GM12878 (cell line): ENCODE measurements at regions of chr3 and their contacts with region 1.

Region 1: DNA sequence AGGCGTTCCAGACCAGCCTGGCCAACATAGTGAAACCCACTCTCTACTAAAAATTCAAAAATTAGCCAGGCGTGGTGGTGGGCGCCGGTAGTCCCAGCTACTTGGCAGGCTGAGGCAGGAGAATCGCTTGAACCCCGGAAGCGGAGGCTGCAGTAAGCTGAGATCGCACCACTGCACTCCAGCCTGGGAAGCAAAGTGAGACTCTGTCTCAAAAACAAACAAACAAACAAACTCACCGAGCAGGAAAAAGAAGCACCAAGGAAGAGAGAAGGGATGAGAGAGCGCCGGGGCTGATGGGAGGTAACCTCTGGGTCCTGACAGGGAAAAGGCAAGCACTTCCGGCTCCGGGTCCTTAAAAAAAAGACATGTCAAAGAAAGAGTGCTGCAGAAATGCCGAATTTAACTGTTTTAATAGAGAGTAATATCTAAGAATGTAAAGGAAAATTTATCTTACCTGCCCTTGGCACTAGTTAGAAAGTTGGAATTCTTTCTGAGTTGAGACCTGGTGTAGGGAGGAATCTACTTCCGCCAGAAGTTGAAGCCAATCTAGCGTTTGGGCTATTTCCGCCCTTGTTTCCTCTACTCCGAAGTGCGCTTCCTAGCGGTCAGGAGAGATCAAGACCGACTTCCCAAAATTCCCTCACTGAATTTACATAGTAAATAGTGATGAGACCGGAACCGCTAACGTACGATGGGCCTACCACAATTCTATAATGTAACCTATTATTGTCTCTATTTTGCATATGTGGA is 29.1 kb downstream of the EFCAB12 start:
- DNase-seq: peak; percentile 93
- ATAC-seq: peak; percentile 83
- H3K4me3 ChIP-seq: peak overlapping the region; percentile 69
- H3K27ac ChIP-seq: peak overlapping the region; percentile 87
- H3K4me1 ChIP-seq: no peaks in the 10 kb centered on the region; the same call in 1 of the 2 replicates
- H3K27me3 ChIP-seq: no peaks in the 10 kb centered on the region
- CTCF ChIP-seq: peak; percentile 82 to 91 (median 87)
- EP300 ChIP-seq: no peak
- POLR2A ChIP-seq: no peak
- RAD21 ChIP-seq: peak; percentile 31; the same call in 1 of the 2 replicates

Region 2: DNA sequence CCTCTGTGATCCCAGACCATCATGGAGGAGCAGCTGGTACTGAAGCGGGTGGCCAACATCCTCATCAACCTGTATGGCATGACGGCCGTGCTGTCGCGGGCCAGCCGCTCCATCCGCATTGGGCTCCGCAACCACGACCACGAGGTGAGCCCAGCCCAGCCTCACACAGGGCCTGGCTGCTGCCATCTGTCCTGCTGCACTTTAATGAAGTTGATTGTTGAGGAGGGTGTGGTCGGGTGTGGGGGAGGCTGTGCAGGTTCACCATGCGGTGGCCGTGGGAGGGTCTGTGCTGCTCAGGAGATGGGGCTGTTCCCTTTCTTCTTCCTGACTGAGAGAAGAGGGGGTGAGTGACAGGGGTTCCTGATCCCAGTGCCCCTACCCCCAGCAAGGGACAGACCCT is 489.3 kb before region 1 on chr3:
- CTCF ChIA-PET with region 1: no interaction called
- POLR2A ChIA-PET with region 1: no interaction called
- RAD21 ChIA-PET with region 1: no interaction called
- SMC1A ChIA-PET with region 1: no interaction called
- in situ Hi-C with region 1: no loop called
- intact Hi-C with region 1: no loop called
- DNase-seq: no peak
- ATAC-seq: no peak
- H3K4me3 ChIP-seq: no peak overlapping the region
- H3K27ac ChIP-seq: no peak overlapping the region
- H3K4me1 ChIP-seq: no peaks in the 10 kb centered on the region
- H3K27me3 ChIP-seq: no peaks in the 10 kb centered on the region
- CTCF ChIP-seq: no peak
- EP300 ChIP-seq: no peak
- POLR2A ChIP-seq: peak; percentile 23; the same call in 1 of the 2 replicates
- RAD21 ChIP-seq: no peak

Region 3: DNA sequence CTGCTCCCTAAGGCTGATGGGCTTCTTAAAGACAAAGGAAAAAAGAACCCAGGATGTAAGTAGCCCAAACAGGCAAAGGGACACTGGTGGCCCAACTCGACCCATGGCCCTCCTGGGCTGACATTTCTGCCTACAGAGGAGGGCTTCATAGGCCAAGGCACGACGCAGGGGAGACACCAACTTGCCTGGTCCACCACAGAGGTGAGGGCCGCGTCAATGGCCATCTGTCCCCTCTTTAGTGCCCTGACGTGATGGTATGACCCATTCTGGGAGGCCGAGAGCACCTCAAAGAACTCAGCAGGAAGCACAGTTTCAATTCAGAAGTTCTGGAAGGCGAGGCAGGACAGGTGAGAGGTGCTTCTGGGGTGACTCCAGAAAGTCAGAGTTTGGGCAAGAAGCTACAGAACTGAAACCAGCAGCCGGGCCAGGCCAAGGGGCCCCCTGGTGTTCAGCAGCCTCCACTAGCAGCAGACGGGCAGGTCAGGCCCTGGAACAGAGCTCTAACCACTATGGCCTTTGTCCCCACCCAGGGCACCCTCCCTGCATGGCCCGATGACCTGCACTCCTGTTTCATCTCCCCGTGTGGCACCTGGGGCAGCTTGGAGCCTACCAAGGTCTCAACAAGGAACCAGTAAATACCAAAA is 75.5 kb before region 1 on chr3:
- CTCF ChIA-PET with region 1: no interaction called
- POLR2A ChIA-PET with region 1: no interaction called
- RAD21 ChIA-PET with region 1: no interaction called
- SMC1A ChIA-PET with region 1: no interaction called
- in situ Hi-C with region 1: no loop called
- intact Hi-C with region 1: no loop called
- DNase-seq: no peak
- ATAC-seq: peak; percentile 81
- H3K4me3 ChIP-seq: no peak overlapping the region
- H3K27ac ChIP-seq: no peak overlapping the region
- H3K4me1 ChIP-seq: peaks cover 4% of the 10 kb centered on the region; the same call in 1 of the 2 replicates
- H3K27me3 ChIP-seq: peaks cover 0 to 3% of the 10 kb centered on the region in 2 experiments; a peak in 2 of 4 replicates
- CTCF ChIP-seq: peak; percentile 39 to 64 (median 45)
- EP300 ChIP-seq: no peak
- POLR2A ChIP-seq: no peak
- RAD21 ChIP-seq: peak; percentile 33

Region 4: DNA sequence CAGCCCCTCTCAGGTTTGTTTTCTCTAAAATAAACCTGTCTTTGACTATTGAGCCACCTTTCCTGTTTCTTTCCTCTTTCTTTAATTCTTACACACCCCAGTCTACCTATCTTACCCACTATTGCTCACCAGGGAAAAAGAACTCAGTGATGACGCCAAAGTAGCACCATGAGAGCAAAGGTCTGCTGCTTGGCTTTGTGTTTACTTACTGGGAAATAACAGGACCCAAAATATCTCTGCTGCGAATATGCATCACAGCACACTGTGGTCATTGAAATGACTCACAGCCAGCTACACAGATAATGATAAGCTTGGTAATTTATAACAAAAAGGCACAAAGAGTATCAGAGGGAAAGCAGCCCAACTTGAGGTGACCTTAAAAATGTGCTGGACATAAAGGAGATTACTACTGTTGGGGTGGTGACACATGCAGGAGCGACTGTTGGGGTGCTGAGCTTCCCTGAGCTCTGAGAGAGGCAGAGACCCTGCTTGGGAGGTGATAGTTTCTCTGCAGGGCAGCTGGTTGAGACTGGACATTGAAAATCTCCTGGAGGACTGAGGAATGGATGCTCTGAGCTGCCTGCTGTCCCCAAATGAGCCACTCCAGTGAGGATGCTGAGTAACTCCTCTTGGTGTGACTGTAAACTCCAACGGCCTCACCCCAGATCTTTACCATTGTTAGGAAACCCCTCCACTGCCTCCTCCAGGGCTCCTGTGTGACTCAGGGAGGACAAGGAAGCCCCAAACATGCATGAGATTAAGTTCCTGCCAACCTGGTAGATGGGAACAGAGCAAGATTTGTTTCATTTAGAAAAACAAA is 14.6 kb after region 1 on chr3:
- CTCF ChIA-PET with region 1: interaction called, 84 read pairs
- POLR2A ChIA-PET with region 1: interaction called, 24 read pairs
- RAD21 ChIA-PET with region 1: interaction called, 19 read pairs
- SMC1A ChIA-PET with region 1: interaction called, 34 read pairs
- in situ Hi-C with region 1: no loop called
- intact Hi-C with region 1: no loop called
- DNase-seq: no peak
- ATAC-seq: peak; percentile 96
- H3K4me3 ChIP-seq: no peak overlapping the region
- H3K27ac ChIP-seq: no peak overlapping the region
- H3K4me1 ChIP-seq: peaks cover 6% of the 10 kb centered on the region
- H3K27me3 ChIP-seq: no peaks in the 10 kb centered on the region
- CTCF ChIP-seq: no peak
- EP300 ChIP-seq: peak; percentile 79 to 82; a peak in 2 of 4 replicates
- POLR2A ChIP-seq: no peak
- RAD21 ChIP-seq: no peak

Region 5: GRCh38 chr3:129421988-129422745 is 22.8 kb after region 1 on chr3:
- CTCF ChIA-PET with region 1: interaction called, 10 read pairs
- POLR2A ChIA-PET with region 1: interaction called, 3 read pairs
- RAD21 ChIA-PET with region 1: interaction called, 5 read pairs
- SMC1A ChIA-PET with region 1: interaction called, 8 read pairs
- in situ Hi-C with region 1: no loop called
- intact Hi-C with region 1: no loop called
- DNase-seq: no peak
- ATAC-seq: no peak
- H3K4me3 ChIP-seq: no peak overlapping the region
- H3K27ac ChIP-seq: no peak overlapping the region
- H3K4me1 ChIP-seq: peaks cover 19% of the 10 kb centered on the region
- H3K27me3 ChIP-seq: no peaks in the 10 kb centered on the region
- CTCF ChIP-seq: no peak
- EP300 ChIP-seq: no peak
- POLR2A ChIP-seq: no peak
- RAD21 ChIP-seq: no peak

Region 6: GRCh38 chr3:129428376-129429079 is 29.2 kb after region 1 on chr3 and contains the start of gene EFCAB12:
- CTCF ChIA-PET with region 1: interaction called, 33 read pairs
- POLR2A ChIA-PET with region 1: interaction called, 10 read pairs
- RAD21 ChIA-PET with region 1: interaction called, 36 read pairs
- SMC1A ChIA-PET with region 1: interaction called, 275 read pairs
- in situ Hi-C with region 1: no loop called
- intact Hi-C with region 1: no loop called
- DNase-seq: no peak
- ATAC-seq: peak; percentile 86
- H3K4me3 ChIP-seq: peak within 1 kb of the TSS; percentile 50; the same call in 1 of the 2 replicates
- H3K27ac ChIP-seq: no peak within 1 kb of the TSS; the same call in 1 of the 2 replicates
- H3K4me1 ChIP-seq: peaks cover 26% of the 10 kb centered on the region
- H3K27me3 ChIP-seq: no peaks in the 10 kb centered on the region
- CTCF ChIP-seq: no peak
- EP300 ChIP-seq: no peak
- POLR2A ChIP-seq: peak; percentile 78
- RAD21 ChIP-seq: no peak
- polyA plus RNA-seq, gene EFCAB12: 0.02 to 0.03 TPM